GM12878 (cell line): ENCODE measurements at regions of chr6 and their contacts with region 1.

Region 1: GRCh38 chr6:21438237-21438985 is 155.1 kb upstream of the SOX4 start:
- DNase-seq: peak; percentile 97
- ATAC-seq: peak; percentile 97
- H3K4me3 ChIP-seq: peak overlapping the region; percentile 60; the same call in 1 of the 2 replicates
- H3K27ac ChIP-seq: peak overlapping the region; percentile 89
- H3K4me1 ChIP-seq: peaks cover 17% of the 10 kb centered on the region
- H3K27me3 ChIP-seq: no peaks in the 10 kb centered on the region
- CTCF ChIP-seq: no peak
- EP300 ChIP-seq: peak; percentile 93 to 99
- POLR2A ChIP-seq: no peak
- RAD21 ChIP-seq: no peak

Region 2: GRCh38 chr6:21003780-21004541 is 434.4 kb before region 1 on chr6:
- CTCF ChIA-PET with region 1: no interaction called
- POLR2A ChIA-PET with region 1: no interaction called
- RAD21 ChIA-PET with region 1: no interaction called
- SMC1A ChIA-PET with region 1: no interaction called
- in situ Hi-C with region 1: no loop called
- intact Hi-C with region 1: loop called (anchors 2 kb)
- DNase-seq: peak; percentile 72
- ATAC-seq: peak; percentile 89
- H3K4me3 ChIP-seq: peak overlapping the region; percentile 32; the same call in 1 of the 2 replicates
- H3K27ac ChIP-seq: peak overlapping the region; percentile 83
- H3K4me1 ChIP-seq: peaks cover 20% of the 10 kb centered on the region
- H3K27me3 ChIP-seq: no peaks in the 10 kb centered on the region
- CTCF ChIP-seq: no peak
- EP300 ChIP-seq: peak in 1 of 2 experiments; percentile 72; a peak in 3 of 4 replicates
- POLR2A ChIP-seq: no peak
- RAD21 ChIP-seq: no peak

Region 3: GRCh38 chr6:21188505-21189223 is 249.7 kb before region 1 on chr6:
- CTCF ChIA-PET with region 1: no interaction called
- POLR2A ChIA-PET with region 1: no interaction called
- RAD21 ChIA-PET with region 1: interaction called, 3 read pairs
- SMC1A ChIA-PET with region 1: no interaction called
- in situ Hi-C with region 1: no loop called
- intact Hi-C with region 1: loop called (anchors 10 kb)
- DNase-seq: peak; percentile 82
- ATAC-seq: peak; percentile 77
- H3K4me3 ChIP-seq: no peak overlapping the region
- H3K27ac ChIP-seq: peak overlapping the region; percentile 77
- H3K4me1 ChIP-seq: peaks cover 19% of the 10 kb centered on the region
- H3K27me3 ChIP-seq: no peaks in the 10 kb centered on the region
- CTCF ChIP-seq: no peak
- EP300 ChIP-seq: no peak
- POLR2A ChIP-seq: no peak
- RAD21 ChIP-seq: no peak

Region 4: DNA sequence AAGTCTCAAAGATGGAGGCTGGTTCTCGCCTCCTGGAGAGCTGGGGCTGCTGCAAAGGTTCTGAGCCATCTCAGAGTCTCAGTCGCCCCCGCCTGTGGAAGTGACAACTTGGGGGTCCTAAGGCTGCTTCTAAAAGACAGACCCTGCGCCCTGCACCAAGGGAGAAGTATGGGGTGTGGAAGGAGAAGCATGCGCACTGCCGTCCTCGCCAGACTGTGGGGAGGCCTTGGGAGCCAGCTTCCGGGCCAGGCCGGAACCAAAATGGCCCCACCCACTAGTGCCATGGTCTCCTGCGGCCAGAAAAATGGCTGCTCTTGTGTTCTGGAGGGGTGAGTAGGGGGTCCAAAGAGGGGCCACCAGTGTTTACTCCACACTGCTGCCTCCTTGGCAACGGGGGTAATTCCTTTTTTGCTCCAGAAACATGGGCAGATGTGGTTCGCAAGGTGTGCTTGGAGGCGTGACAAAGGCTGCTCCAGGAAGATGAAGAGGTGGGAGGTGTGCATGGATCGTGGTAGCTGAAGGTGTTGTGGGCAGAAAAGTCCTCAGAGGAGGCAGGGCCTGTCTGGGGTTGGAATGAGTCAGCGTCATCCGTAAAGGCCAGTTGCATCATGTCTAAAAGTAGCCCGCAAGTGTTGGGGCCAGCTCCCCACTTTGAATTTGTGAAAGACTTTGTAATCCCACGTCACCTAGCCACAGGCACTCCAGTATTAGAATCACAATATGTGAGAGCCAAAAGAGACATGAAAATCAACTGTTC is 174.7 kb before region 1 on chr6:
- CTCF ChIA-PET with region 1: no interaction called
- POLR2A ChIA-PET with region 1: no interaction called
- RAD21 ChIA-PET with region 1: no interaction called
- SMC1A ChIA-PET with region 1: interaction called, 5 read pairs
- in situ Hi-C with region 1: no loop called
- intact Hi-C with region 1: loop called (anchors 5 kb)
- DNase-seq: peak; percentile 63
- ATAC-seq: peak; percentile 94
- H3K4me3 ChIP-seq: no peak overlapping the region
- H3K27ac ChIP-seq: peak overlapping the region; percentile 69
- H3K4me1 ChIP-seq: peaks cover 17% of the 10 kb centered on the region
- H3K27me3 ChIP-seq: no peaks in the 10 kb centered on the region
- CTCF ChIP-seq: no peak
- EP300 ChIP-seq: peak; percentile 64 to 92; a peak in 3 of 4 replicates
- POLR2A ChIP-seq: no peak
- RAD21 ChIP-seq: 0 out of 2 replicates have a peak, but pooled peaks have one; percentile 7

Region 5: DNA sequence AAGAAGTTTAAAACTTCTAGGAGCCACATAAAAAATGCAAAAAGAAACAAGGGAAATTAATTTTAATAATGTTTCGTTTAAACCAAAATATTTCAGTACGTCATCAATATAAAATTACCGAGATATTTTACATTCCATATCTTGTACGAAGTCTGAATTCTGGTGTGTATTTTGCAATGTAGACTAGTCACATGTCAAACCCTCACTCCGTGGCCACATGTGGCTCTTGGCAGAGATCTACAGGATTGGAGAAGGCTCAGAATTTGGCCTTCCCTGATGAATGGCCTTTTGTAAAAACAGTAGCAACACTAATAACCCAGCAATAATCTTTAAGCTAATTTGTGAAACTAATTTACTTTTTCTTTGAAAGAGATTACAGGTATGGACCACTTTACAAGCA is 641.4 kb after region 1 on chr6:
- CTCF ChIA-PET with region 1: no interaction called
- POLR2A ChIA-PET with region 1: no interaction called
- RAD21 ChIA-PET with region 1: no interaction called
- SMC1A ChIA-PET with region 1: no interaction called
- in situ Hi-C with region 1: no loop called
- intact Hi-C with region 1: no loop called
- DNase-seq: no peak
- ATAC-seq: no peak
- H3K4me3 ChIP-seq: no peak overlapping the region
- H3K27ac ChIP-seq: no peak overlapping the region
- H3K4me1 ChIP-seq: no peaks in the 10 kb centered on the region; the same call in 1 of the 2 replicates
- H3K27me3 ChIP-seq: no peaks in the 10 kb centered on the region
- CTCF ChIP-seq: no peak
- EP300 ChIP-seq: no peak
- POLR2A ChIP-seq: no peak
- RAD21 ChIP-seq: no peak